Left colon (tissue), 2 donors: ENCODE measurements at regions of chr3 and their contacts with region 1.

Region 1: DNA sequence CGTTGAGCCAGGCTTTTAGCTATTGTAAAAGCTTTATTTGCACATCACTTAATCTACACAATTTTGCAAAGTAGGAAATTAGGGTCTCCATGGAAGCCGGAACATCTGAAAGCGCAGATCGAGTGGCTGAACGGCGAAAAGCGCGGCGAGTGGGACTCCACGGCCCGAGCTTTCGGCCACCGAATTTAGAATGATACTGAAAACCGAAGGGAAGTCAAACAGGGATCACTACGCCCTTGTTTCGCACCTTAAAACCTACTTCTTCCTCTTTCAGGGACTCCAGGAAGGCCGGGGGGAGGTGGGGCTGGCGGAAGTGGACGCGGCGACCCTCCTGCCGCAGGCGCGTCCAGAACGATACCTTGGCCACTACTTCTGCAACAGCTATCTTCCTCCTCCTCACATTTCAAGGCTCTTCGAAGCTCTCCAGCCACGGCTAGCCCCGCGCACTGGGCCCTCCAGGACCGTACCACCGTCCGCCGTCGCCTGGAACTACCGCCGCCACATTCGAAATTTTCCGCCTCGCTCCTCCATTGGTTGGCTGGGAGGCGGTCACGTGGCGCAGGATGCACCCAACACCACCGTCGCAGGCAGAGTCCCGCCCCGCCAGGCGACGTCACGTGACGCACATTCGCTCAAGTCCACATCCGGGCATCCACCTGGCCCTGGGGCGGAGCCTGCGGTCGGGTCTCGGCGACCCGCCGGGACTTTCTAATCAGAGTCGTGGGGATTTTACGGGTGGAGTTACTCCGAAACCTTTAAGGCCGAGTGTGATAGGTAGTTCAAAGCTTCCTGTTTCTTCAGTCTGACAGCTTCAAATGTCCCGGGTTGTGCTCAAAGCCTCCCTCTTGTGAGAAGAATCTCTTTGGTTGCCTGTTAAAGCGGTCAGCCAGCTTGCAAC is at the start of gene SGO1:
- DNase-seq: peak; percentile 99 to 100
- ATAC-seq: peak; percentile 98
- total RNA-seq, gene SGO1: 2.8 to 4.8 TPM

Region 2: DNA sequence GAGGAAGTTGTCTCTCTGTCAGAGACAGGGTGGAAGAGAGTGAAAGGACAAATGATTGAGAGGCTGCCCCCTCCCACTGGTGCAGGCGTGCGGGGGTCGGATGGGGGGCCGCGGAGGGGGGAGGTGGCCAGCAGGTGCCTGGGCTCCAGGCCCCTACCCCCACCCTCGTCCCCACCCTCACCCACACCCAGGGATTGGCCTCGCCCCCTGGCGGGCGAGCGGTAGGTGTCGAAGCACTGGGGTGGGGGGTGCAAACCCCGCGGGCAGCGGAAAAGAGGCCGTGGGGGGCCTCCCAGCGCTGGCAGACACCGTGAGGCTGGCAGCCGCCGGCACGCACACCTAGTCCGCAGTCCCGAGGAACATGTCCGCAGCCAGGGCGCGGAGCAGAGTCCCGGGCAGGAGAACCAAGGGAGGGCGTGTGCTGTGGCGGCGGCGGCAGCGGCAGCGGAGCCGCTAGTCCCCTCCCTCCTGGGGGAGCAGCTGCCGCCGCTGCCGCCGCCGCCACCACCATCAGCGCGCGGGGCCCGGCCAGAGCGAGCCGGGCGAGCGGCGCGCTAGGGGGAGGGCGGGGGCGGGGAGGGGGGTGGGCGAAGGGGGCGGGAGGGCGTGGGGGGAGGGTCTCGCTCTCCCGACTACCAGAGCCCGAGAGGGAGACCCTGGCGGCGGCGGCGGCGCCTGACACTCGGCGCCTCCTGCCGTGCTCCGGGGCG is 146.0 kb before region 1 on chr3 and contains the start of gene KAT2B:
- intact Hi-C with region 1: loop called in 1 of 2 experiments (anchors 5 kb)
- DNase-seq: peak; percentile 80 to 85
- ATAC-seq: peak; percentile 69
- total RNA-seq, gene KAT2B: 26.6 to 28.8 TPM

Region 3: DNA sequence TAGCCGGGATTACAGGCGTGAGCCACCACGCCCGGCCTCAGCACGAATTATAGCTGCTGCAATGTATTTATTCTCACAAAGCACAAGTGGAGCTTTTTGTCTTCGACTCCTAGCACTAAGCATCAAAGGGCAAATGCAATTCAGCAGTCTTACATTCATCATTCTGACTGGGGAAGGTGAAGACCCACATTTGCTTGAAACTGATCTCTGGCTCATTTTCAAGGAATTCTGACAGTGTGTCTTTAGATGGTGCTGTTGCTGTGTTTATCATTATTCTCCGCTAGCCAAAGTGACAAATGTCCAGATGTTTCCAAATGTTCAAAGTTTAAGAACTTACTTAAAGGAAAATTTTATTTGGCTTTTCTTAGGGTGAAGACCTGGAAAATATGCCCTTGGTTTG is 55.8 kb before region 1 on chr3:
- intact Hi-C with region 1: no loop called
- DNase-seq: no peak
- ATAC-seq: no peak